AG04449 (cell line): ENCODE measurements at regions of chr19 and their contacts with region 1.

Region 1: DNA sequence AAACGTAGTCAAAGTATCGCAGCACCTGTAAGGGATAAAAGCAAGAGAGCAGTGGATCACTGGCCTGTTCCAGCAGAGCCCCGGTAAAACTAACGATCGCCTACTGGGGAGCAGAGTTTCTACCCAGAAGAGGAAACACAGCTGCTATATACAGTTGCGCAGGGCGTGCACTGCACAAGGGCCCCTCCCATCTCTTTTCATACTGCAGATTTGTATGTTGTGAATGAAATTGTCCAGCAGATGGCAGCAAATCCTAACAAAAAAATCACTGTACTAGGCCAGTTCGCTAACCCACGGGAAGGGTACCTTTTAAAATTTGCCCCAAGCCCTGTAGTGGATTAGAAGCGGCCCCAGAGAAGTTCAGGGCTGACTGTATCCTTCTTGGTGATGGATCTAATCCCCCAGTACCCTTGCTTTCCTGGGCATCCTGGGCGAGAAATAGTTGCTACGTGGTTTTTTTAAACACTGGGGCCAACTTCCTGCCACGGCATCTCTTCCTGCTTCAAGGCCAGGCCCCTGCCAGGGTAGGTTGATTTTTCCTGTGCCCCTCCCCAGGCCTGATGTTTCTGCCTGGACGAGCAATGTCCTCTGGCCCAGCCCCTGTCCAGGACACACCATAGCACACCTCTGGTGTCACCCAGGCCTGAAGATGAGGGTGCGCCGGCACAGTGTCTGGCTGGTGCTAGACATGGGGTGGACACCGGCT is 127.0 kb downstream of the IER2 start:
- DNase-seq: no peak
- H3K4me3 ChIP-seq: no peak overlapping the region
- CTCF ChIP-seq: peak; percentile 39

Region 2: DNA sequence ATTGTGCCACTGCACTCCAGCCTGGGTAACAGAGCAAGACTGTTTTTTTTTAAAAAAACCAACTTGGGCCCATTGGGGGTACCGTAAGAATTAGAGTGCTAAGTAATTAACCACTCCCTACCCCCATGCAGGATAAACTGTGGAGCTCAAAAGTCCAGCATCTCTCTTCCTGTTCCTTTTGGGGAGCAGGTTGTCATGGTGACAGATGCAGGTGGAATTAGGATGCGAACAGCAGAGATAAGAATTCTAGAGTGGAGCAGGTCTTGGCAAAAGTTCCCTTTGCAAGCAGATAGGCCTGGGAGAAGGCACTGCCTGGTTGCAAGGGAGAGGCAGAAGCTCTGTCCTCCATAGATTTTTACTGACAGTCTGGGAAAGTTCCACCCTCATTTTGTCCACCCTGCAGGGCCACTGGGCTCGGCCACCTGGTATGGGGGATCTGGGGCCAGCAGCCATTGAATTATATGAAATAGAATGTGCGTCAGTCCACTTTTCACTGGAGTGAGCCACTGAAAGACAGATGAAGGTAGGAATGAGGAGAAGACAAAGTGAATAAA is 14.6 kb after region 1 on chr19:
- CTCF ChIA-PET with region 1: interaction called, 27 read pairs
- POLR2A ChIA-PET with region 1: no interaction called
- DNase-seq: no peak
- H3K4me3 ChIP-seq: no peak overlapping the region
- CTCF ChIP-seq: no peak

Region 3: DNA sequence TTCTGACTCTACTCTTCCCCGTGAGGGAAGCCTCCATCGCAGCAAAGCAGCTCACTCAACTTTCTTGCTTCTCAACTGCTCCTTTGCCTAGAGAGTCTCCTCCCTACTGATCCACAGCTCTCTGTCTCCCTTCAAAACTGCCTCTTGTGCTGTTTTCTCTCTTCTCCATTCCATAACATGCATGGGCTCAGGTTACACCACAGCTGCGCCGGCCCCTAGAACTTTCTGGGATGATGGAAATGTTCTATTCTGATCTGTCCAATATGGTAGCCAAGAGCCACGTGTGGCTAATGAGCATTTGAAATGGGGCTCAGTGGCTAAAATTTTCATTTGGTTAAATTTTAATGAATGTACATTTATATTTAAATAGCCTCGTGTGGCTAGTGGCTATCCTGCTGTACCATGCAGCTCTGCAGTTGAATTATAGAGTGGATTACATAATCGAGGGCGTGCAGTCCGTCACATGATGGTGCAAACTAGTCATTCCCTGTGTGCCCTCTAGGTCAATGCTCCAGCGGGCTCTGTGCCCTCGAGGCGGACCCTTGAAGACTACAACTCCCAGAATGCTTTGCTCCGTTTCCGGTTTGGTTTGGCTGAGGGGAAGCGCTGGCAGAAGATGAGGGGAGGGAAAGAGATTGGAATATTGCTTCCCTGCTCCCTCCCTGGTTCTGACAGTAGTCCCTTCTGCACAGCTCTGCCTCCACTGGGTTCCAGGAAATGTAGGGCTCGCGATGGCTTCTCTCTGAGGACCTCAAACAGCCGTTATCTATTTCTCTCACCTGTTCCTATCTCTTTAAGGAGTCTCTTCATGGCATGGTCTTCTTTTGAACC is 119.2 kb after region 1 on chr19:
- CTCF ChIA-PET with region 1: interaction called, 13 read pairs
- POLR2A ChIA-PET with region 1: no interaction called
- DNase-seq: no peak
- H3K4me3 ChIP-seq: no peak overlapping the region
- CTCF ChIP-seq: no peak

Region 4: DNA sequence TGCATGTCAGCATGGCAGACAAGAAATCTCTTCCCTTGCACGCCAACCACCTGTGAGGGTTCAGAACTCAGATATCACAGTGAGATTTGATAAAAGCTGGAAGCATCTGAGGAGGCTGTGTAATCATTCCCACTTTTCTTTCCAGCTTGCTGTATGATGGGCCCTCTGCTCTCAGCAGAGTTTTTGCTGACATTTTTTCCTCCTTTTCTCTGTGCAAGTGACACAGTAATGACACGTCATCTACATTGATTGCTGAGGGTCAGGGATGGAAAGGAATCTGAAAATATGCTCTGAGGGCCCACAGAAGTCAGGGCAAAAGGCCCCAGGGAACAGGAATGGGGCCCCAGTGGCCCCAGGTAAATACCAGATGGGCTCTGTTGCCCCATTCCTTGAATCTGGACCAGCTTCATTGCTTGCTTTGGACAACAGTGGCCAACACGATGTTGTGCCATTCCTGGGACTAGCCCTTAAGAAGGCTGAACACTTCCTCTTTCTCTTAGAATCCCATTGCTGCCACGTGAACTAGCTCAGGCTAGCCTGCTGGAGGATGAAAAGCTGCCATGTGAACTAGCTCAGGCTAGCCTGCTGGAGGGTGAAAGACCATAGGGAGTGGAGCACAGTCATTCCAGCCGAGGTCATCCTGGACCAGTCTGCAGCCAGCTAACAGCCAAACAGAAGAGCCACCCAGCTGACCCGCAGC is 160.8 kb after region 1 on chr19:
- CTCF ChIA-PET with region 1: interaction called, 10 read pairs
- POLR2A ChIA-PET with region 1: no interaction called
- DNase-seq: no peak
- H3K4me3 ChIP-seq: no peak overlapping the region
- CTCF ChIP-seq: no peak

Region 5: GRCh38 chr19:13588957-13589833 is 311.9 kb after region 1 on chr19:
- CTCF ChIA-PET with region 1: interaction called, 265 read pairs
- POLR2A ChIA-PET with region 1: no interaction called
- DNase-seq: no peak
- H3K4me3 ChIP-seq: no peak overlapping the region; the same call in 1 of the 2 replicates
- CTCF ChIP-seq: peak; percentile 99